HEK293 (cell line): ENCODE measurements at regions of chr16 and their contacts with region 1.

Region 1: DNA sequence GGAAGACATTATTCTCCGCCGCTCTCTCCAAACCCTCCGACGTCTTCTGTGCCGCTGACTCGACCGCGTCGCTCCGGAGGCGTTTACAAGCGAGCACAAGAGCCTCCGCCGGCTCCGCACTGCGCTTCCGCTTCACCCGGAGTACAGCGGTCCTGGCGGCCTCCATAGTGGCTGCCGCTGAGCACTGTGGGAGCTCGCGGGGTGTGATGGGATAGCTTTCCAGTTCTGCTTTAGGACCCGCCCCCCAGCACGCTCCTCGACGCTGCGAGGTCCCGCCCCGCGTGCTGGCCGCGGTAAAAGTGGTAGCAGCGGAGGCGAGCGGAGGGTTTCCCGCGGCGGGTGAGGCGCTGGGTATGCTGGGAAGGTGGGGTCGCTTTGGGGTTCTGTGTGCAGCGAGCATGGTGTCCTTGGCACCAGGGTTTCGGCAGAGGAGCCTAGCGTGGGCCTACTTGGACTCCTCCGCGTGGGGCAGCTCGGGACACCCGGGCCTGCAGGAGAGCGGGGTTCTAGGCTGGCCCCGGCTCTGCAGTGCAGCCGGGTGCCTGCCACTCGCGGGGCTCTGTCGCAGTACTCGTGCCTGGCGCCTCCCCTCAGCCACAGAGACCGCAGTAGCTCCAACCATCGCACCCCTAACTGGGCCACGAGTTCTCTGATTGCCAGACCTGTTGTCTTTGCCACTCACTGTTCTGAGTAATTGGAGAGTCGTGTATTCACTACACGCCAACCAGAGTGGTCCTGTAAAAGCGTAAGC is at the starts of genes PRMT7 and SLC7A6OS:
- H3K4me3 ChIP-seq: peak within 1 kb of the TSS; percentile 85
- H3K27ac ChIP-seq: peak within 1 kb of the TSS; percentile 72
- H3K4me1 ChIP-seq: no peaks in the 10 kb centered on the region
- CTCF ChIP-seq: peak; percentile 68

Region 2: DNA sequence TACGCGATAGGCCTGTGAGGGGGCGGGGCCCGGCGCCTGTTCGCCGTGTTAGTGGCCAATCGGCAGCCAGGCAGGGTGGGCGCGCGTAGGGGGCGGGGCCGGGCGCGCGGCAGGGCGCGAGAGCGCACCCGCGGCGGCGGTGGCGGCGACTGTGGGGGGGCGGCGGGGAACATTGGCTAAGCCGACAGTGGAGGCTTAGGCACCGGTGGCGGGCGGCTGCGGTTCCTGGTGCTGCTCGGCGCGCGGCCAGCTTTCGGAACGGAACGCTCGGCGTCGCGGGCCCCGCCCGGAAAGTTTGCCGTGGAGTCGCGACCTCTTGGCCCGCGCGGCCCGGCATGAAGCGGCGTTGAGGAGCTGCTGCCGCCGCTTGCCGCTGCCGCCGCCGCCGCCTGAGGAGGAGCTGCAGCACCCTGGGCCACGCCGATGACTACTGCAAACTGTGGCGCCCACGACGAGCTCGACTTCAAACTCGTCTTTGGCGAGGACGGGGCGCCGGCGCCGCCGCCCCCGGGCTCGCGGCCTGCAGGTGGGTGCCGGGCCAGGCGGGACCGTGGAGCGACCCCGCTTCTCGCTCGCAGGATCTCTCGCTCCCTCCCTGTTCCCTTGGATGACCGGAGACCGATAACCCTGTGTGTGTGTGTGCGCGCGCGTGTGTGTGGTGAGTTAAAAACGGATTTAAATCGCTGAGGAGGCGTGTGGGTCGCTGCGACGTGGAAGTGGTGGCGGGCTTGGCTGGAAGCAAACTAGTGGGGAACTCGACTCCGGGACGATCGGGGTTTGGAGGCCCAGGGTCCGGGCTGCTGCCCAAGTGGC is 225.5 kb before region 1 on chr16 and contains the start of gene NFATC3:
- CTCF ChIA-PET with region 1: no interaction called
- POLR2A ChIA-PET with region 1: interaction called, 14 read pairs
- H3K4me3 ChIP-seq: peak within 1 kb of the TSS; percentile 77
- H3K27ac ChIP-seq: peak within 1 kb of the TSS; percentile 88
- H3K4me1 ChIP-seq: peaks cover 14% of the 10 kb centered on the region
- CTCF ChIP-seq: peak; percentile 53; the same call in 1 of the 2 replicates

Region 3: GRCh38 chr16:68237243-68238028 is 73.5 kb before region 1 on chr16:
- CTCF ChIA-PET with region 1: no interaction called
- POLR2A ChIA-PET with region 1: interaction called, 17 read pairs
- H3K4me3 ChIP-seq: peak overlapping the region; percentile 40
- H3K27ac ChIP-seq: peak overlapping the region; percentile 75
- H3K4me1 ChIP-seq: peaks cover 7% of the 10 kb centered on the region; the same call in 1 of the 2 replicates
- CTCF ChIP-seq: peak; percentile 14; the same call in 1 of the 2 replicates

Region 4: GRCh38 chr16:68298907-68299561 is 11.9 kb before region 1 on chr16:
- CTCF ChIA-PET with region 1: interaction called, 7 read pairs
- POLR2A ChIA-PET with region 1: interaction called, 16 read pairs
- H3K4me3 ChIP-seq: no peak overlapping the region
- H3K27ac ChIP-seq: no peak overlapping the region
- H3K4me1 ChIP-seq: no peaks in the 10 kb centered on the region
- CTCF ChIP-seq: no peak

Region 5: DNA sequence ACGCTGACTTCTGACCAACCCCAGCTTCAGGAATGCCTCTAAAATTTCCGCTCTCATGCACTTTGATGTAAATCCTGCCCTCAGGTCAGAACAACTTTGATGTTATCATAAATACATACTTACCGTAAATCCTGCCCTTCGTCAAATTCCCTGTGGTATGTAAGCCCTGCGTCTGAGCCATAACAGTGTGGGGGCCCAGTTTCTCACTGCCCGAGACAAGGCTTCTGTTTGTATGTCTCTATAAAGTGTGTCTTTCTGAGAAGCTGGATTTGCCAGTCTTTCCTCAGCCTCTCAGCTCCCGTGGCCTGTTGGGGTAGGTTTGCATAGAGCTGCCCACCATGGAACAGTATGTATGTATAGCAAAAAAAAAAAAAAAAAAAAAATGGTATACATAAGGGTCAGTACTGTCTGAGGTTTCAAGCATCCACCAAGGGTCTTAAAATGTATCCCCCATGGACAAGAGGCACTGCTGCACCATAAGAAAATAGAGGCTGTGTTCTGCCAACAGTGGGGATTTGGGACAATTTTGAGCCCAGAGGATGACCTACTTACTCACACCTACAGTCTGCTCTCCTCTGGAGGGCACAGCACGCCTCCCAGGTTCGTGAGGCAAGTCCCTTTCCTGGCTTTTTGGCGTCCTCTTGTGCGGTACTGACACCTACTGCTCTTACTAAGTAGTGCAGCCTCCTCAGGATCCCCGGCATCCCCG is 17.4 kb after region 1 on chr16:
- CTCF ChIA-PET with region 1: interaction called, 28 read pairs
- POLR2A ChIA-PET with region 1: interaction called, 39 read pairs
- H3K4me3 ChIP-seq: no peak overlapping the region
- H3K27ac ChIP-seq: no peak overlapping the region
- H3K4me1 ChIP-seq: peaks cover 3% of the 10 kb centered on the region; the same call in 1 of the 2 replicates
- CTCF ChIP-seq: peak; percentile 90

Region 6: GRCh38 chr16:68396481-68396880 is 85.5 kb after region 1 on chr16:
- CTCF ChIA-PET with region 1: no interaction called
- POLR2A ChIA-PET with region 1: no interaction called
- H3K4me3 ChIP-seq: no peak overlapping the region
- H3K27ac ChIP-seq: no peak overlapping the region
- H3K4me1 ChIP-seq: no peaks in the 10 kb centered on the region
- CTCF ChIP-seq: peak; percentile 50; the same call in 1 of the 2 replicates